ENCODE measurements at regions of chr9 and their contacts with region 1.

Region 1: GRCh38 chr9:3732077-3733038 is 206.6 kb upstream of the RFX3 start:
- DNase-seq: peak; percentile 90
- ATAC-seq: peak; percentile 99
- H3K4me3 ChIP-seq: peak overlapping the region; percentile 10; the same call in 1 of the 2 replicates
- H3K27ac ChIP-seq: peak overlapping the region; percentile 19; the same call in 1 of the 2 replicates
- H3K4me1 ChIP-seq: peaks cover 3% of the 10 kb centered on the region
- H3K27me3 ChIP-seq: no peaks in the 10 kb centered on the region
- CTCF ChIP-seq: peak; percentile 89
- POLR2A ChIP-seq: 0 out of 2 replicates have a peak, but pooled peaks have one; percentile 40
- RAD21 ChIP-seq: peak; percentile 93

Region 2: GRCh38 chr9:3467593-3468219 is 264.7 kb before region 1 on chr9:
- CTCF ChIA-PET with region 1: no interaction called
- POLR2A ChIA-PET with region 1: no interaction called
- dilution Hi-C with region 1: no loop called
- in situ Hi-C with region 1: no loop called
- intact Hi-C with region 1: loop called (anchors 1 kb)
- DNase-seq: peak; percentile 72
- ATAC-seq: peak; percentile 100
- H3K4me3 ChIP-seq: no peak overlapping the region
- H3K27ac ChIP-seq: no peak overlapping the region
- H3K4me1 ChIP-seq: no peaks in the 10 kb centered on the region
- H3K27me3 ChIP-seq: no peaks in the 10 kb centered on the region
- CTCF ChIP-seq: peak; percentile 91
- POLR2A ChIP-seq: peak; percentile 54; the same call in 1 of the 2 replicates
- RAD21 ChIP-seq: peak; percentile 95

Region 3: GRCh38 chr9:3962971-3963642 is 230.7 kb after region 1 on chr9:
- CTCF ChIA-PET with region 1: no interaction called
- POLR2A ChIA-PET with region 1: no interaction called
- dilution Hi-C with region 1: no loop called
- in situ Hi-C with region 1: no loop called
- intact Hi-C with region 1: loop called (anchors 5 kb)
- DNase-seq: peak; percentile 93
- ATAC-seq: peak; percentile 80
- H3K4me3 ChIP-seq: no peak overlapping the region
- H3K27ac ChIP-seq: peak overlapping the region; percentile 73; the same call in 1 of the 2 replicates
- H3K4me1 ChIP-seq: peaks cover 14% of the 10 kb centered on the region
- H3K27me3 ChIP-seq: no peaks in the 10 kb centered on the region
- CTCF ChIP-seq: no peak
- POLR2A ChIP-seq: no peak
- RAD21 ChIP-seq: no peak

Region 4: DNA sequence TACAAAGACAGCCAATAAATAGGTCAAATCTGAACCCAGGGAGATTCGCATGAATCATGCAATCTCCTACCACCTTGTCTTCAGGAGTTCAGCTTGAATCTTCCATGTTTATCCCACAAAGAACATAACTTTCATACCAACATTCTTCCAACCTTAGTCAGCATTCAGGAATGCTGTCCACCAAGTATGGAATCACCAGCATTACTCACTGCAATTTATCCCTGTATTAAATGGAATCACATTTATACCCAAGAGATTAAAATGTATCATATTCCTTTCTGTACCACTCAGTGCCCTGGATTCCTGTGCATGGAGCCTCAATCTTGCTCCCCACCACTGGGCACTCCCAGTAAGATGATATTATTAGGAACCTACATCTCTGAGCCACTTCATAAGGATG is 404.9 kb after region 1 on chr9:
- CTCF ChIA-PET with region 1: no interaction called
- POLR2A ChIA-PET with region 1: no interaction called
- dilution Hi-C with region 1: no loop called
- in situ Hi-C with region 1: no loop called
- intact Hi-C with region 1: loop called (anchors 5 kb)
- DNase-seq: peak; percentile 97
- ATAC-seq: peak; percentile 75
- H3K4me3 ChIP-seq: no peak overlapping the region
- H3K27ac ChIP-seq: peak overlapping the region; percentile 75
- H3K4me1 ChIP-seq: peaks cover 23% of the 10 kb centered on the region
- H3K27me3 ChIP-seq: no peaks in the 10 kb centered on the region
- CTCF ChIP-seq: no peak
- POLR2A ChIP-seq: no peak
- RAD21 ChIP-seq: 0 out of 2 replicates have a peak, but pooled peaks have one; percentile 10

Region 5: DNA sequence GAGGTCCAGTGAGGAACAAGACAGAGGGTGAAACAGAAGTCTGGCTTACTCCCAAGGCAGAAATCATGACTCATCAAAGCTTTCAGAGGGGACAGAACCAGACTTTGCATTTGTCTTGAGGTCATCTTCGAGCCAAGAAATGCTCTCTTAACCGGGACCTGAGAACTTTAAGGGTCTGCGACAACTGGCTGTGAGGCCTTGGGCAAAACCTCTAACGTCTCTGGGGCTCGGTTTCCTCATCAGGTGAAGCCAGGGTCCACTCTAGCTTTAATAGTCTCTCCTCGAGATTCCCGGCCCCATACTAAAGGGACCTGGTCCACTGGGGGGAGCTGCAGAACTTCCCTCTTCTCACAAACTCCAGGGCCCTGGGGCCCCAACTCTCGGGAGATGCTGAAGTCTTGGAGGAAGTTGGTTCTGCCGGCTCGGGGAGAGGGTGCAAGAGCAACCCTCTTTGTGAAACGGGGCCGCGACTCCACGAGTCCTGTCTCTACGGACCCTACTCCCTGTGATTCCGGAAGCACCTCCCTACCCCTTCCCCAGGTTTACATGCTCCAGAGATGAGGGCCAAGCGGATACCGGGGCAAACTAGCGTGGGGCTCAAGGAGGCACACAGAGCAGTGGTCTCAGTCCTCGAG is 564.9 kb after region 1 on chr9:
- CTCF ChIA-PET with region 1: interaction called, 7 read pairs
- POLR2A ChIA-PET with region 1: no interaction called
- dilution Hi-C with region 1: no loop called
- in situ Hi-C with region 1: no loop called
- intact Hi-C with region 1: loop called (anchors 1 kb)
- DNase-seq: peak; percentile 87
- ATAC-seq: peak; percentile 22
- H3K4me3 ChIP-seq: peak overlapping the region; percentile 74
- H3K27ac ChIP-seq: peak overlapping the region; percentile 99
- H3K4me1 ChIP-seq: peaks cover 15% of the 10 kb centered on the region
- H3K27me3 ChIP-seq: no peaks in the 10 kb centered on the region
- CTCF ChIP-seq: peak; percentile 55
- POLR2A ChIP-seq: no peak; the same call in 1 of the 2 replicates
- RAD21 ChIP-seq: peak; percentile 37; the same call in 1 of the 2 replicates

Region 6: GRCh38 chr9:4366591-4367330 is 634.4 kb after region 1 on chr9:
- CTCF ChIA-PET with region 1: interaction called, 3 read pairs
- POLR2A ChIA-PET with region 1: no interaction called
- dilution Hi-C with region 1: no loop called
- in situ Hi-C with region 1: loop called (anchors 5 kb)
- intact Hi-C with region 1: loop called (anchors 1 kb)
- DNase-seq: peak; percentile 54
- ATAC-seq: no peak
- H3K4me3 ChIP-seq: no peak overlapping the region
- H3K27ac ChIP-seq: no peak overlapping the region
- H3K4me1 ChIP-seq: no peaks in the 10 kb centered on the region
- H3K27me3 ChIP-seq: peaks cover 2% of the 10 kb centered on the region
- CTCF ChIP-seq: peak; percentile 80
- POLR2A ChIP-seq: no peak
- RAD21 ChIP-seq: peak; percentile 93